Caco-2 (cell line): ENCODE measurements at regions of chr10 and their contacts with region 1.

Region 1: GRCh38 chr10:80272793-80273517 is 16.5 kb downstream of the MAT1A start:
- DNase-seq: peak; percentile 65 to 71
- H3K4me3 ChIP-seq: no peak overlapping the region
- H3K4me3 Mint-ChIP-seq: no peak overlapping the region
- H3K27ac Mint-ChIP-seq: peak overlapping the region; percentile 45
- H3K4me1 ChIP-seq: peaks cover 18% of the 10 kb centered on the region
- H3K4me1 Mint-ChIP-seq: no peaks in the 10 kb centered on the region
- H3K27me3 ChIP-seq: no peaks in the 10 kb centered on the region
- H3K27me3 Mint-ChIP-seq: no peaks in the 10 kb centered on the region
- CTCF ChIP-seq: no peak

Region 2: DNA sequence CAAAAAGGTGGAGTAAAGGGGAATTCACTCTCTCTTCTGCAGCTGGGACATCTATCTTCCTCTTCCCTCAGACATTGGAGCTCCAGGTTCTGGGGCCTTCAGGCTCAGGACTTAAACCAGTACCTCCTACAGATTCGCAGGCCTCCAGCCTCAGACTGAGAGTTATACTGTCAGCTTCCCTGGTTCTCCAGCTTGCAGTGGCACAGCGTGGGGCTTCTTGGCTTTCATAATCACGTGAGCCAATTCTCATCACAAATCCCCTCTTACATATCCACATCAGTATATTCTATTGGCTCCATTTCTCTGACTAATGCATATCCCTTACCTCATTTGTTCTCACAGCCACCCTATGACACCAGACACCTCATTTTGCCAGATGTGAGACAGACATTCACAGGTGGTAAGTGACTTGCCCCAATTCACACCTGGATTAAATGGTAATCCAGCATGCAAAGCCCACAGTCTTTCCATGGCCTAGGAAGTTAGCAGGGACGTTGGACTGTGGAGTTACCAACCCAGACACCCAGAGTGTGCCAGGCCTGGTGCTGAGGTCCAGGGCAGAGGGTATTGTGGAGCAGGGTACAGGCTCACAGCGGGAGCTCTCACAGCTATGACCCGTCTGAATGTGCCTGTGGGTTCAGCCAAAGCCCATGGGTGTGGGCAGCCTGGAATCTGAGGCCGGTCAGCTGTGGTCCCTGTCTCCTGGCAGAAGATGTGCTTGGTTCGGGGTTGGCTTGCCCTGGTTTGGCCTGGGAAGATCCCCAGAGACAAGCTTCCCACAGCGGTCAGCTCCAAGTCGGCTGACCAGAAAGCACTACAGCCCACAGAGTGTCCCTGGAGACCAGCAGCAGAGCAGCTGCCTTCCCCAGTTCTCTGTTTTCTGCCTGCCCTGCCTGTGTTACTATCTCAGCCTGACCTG is 809.1 kb before region 1 on chr10:
- CTCF ChIA-PET with region 1: no interaction called
- POLR2A ChIA-PET with region 1: no interaction called
- intact Hi-C with region 1: no loop called
- DNase-seq: no peak
- H3K4me3 ChIP-seq: no peak overlapping the region
- H3K4me3 Mint-ChIP-seq: no peak overlapping the region
- H3K27ac Mint-ChIP-seq: no peak overlapping the region
- H3K4me1 ChIP-seq: no peaks in the 10 kb centered on the region
- H3K4me1 Mint-ChIP-seq: no peaks in the 10 kb centered on the region
- H3K27me3 ChIP-seq: no peaks in the 10 kb centered on the region
- H3K27me3 Mint-ChIP-seq: no peaks in the 10 kb centered on the region
- CTCF ChIP-seq: no peak

Region 3: GRCh38 chr10:80289451-80290287 is 16.7 kb after region 1 on chr10 and contains the start of gene MAT1A:
- CTCF ChIA-PET with region 1: interaction called, 3 read pairs
- POLR2A ChIA-PET with region 1: no interaction called
- intact Hi-C with region 1: loop called (anchors 2 kb)
- DNase-seq: peak; percentile 64 to 66
- H3K4me3 ChIP-seq: peak within 1 kb of the TSS; percentile 11; the same call in 1 of the 2 replicates
- H3K4me3 Mint-ChIP-seq: peak within 1 kb of the TSS; percentile 49
- H3K27ac Mint-ChIP-seq: peak within 1 kb of the TSS; percentile 20
- H3K4me1 ChIP-seq: peaks cover 25% of the 10 kb centered on the region
- H3K4me1 Mint-ChIP-seq: peaks cover 15% of the 10 kb centered on the region
- H3K27me3 ChIP-seq: no peaks in the 10 kb centered on the region
- H3K27me3 Mint-ChIP-seq: no peaks in the 10 kb centered on the region
- CTCF ChIP-seq: peak in 1 of 2 experiments; percentile 35
- total RNA-seq, gene MAT1A: 3.2 and 3.4 TPM in 2 replicates

Region 4: GRCh38 chr10:80498833-80499741 is 226.1 kb after region 1 on chr10:
- CTCF ChIA-PET with region 1: no interaction called
- POLR2A ChIA-PET with region 1: no interaction called
- intact Hi-C with region 1: no loop called
- DNase-seq: peak; percentile 86 to 91
- H3K4me3 ChIP-seq: no peak overlapping the region
- H3K4me3 Mint-ChIP-seq: peak overlapping the region; percentile 60
- H3K27ac Mint-ChIP-seq: peak overlapping the region; percentile 87
- H3K4me1 ChIP-seq: peaks cover 94% of the 10 kb centered on the region
- H3K4me1 Mint-ChIP-seq: peaks cover 86% of the 10 kb centered on the region
- H3K27me3 ChIP-seq: no peaks in the 10 kb centered on the region
- H3K27me3 Mint-ChIP-seq: no peaks in the 10 kb centered on the region
- CTCF ChIP-seq: no peak